Heart right ventricle (tissue), 16 donors: ENCODE measurements at regions of chr11 and their contacts with region 1.

Region 1: GRCh38 chr11:64533501-64534261 is 57.3 kb upstream of the SLC22A12 start:
- DNase-seq: no peak
- ATAC-seq: no peak
- H3K4me3 ChIP-seq: no peak overlapping the region
- H3K27ac ChIP-seq: no peak overlapping the region
- H3K4me1 ChIP-seq: peaks cover 0 to 10% (median 0%) of the 10 kb centered on the region in 9 donors
- H3K27me3 ChIP-seq: peaks cover 0 to 48% (median 27%) of the 10 kb centered on the region in 7 donors
- CTCF ChIP-seq: no peak

Region 2: DNA sequence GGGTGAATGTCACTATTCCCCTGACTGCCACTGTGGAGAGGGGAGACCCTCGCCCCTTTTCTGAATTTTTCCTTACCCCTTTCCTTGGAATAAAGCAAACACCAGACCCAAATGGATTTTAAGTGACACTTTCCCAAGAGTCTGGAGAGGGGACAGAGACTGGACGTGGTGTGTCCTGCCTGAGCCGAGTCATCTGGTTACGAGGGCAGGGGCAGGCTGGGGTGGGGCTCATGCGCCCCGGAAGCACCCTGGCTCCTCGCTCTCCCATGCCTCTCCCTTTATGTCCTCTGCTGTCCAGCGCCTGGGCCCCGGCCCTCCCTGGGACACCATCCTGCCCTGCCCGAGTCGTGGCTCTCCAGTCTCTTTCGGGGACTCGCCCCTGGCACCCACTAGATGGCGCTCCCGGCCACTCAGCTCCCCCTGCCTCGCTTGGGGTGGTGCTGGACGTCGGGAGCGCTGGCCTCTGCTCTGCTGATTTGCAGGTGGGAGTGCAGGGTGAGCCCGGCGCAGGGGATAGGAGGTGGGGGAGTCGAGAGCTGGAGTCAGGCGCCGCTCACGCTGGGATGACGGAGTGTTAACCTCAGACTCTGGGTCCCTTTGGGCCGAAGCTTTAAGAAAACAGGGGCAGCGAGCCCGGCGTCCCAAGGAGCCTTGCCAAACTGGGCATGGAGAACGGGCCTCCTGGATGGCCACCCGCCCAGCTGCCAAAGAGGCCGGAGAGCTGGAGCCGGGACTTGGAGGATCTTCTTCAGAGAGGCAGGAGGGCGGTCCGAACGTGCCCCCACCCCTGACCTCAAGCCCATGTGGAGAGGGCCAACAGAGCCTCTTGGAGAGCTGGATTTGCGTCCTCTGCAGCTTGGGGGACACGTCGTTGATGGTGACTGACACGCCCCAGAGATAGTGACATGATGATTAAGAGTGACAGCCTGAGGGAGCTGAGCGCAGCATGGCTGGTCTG is 84.8 kb before region 1 on chr11:
- intact Hi-C with region 1: loop called in 1 of 10 experiments (anchors 1 kb)
- DNase-seq: peak; percentile 78 to 86
- ATAC-seq: peak; percentile 95 to 98 (median 96)
- H3K4me3 ChIP-seq: peak overlapping the region in 9 of 10 donors; percentile 20 to 46 (median 42)
- H3K27ac ChIP-seq: peak overlapping the region in 5 of 10 donors; percentile 5 to 83 (median 46)
- H3K4me1 ChIP-seq: peaks cover 9 to 32% (median 17%) of the 10 kb centered on the region in 9 donors
- H3K27me3 ChIP-seq: peaks cover 0 to 42% (median 25%) of the 10 kb centered on the region in 7 donors
- CTCF ChIP-seq: peak; percentile 79 to 93 (median 87)